Common myeloid progenitor, CD34-positive (primary cell): ENCODE measurements at regions of chr6 and their contacts with region 1.

Region 1: GRCh38 chr6:119110601-119111548 is 32.4 kb upstream of the FAM184A start:
- DNase-seq: peak; percentile 62 to 80 (median 72)
- H3K4me3 ChIP-seq: no peak overlapping the region
- H3K27ac ChIP-seq: no peak overlapping the region
- H3K4me1 ChIP-seq: peaks cover 0 to 8% (median 6%) of the 10 kb centered on the region in 4 experiments
- H3K27me3 ChIP-seq: no peaks in the 10 kb centered on the region

Region 2: GRCh38 chr6:118963003-118963402 is 147.9 kb before region 1 on chr6:
- CTCF ChIA-PET with region 1: interaction called, 129 read pairs
- POLR2A ChIA-PET with region 1: interaction called, 3 read pairs
- DNase-seq: peak; percentile 2 to 36 (median 29)
- H3K4me3 ChIP-seq: no peak overlapping the region
- H3K27ac ChIP-seq: no peak overlapping the region
- H3K4me1 ChIP-seq: no peaks in the 10 kb centered on the region
- H3K27me3 ChIP-seq: no peaks in the 10 kb centered on the region

Region 3: GRCh38 chr6:118968416-118968815 is 142.5 kb before region 1 on chr6:
- CTCF ChIA-PET with region 1: interaction called, 129 read pairs
- POLR2A ChIA-PET with region 1: interaction called, 3 read pairs
- DNase-seq: peak; percentile 33 to 61 (median 57)
- H3K4me3 ChIP-seq: no peak overlapping the region
- H3K27ac ChIP-seq: no peak overlapping the region
- H3K4me1 ChIP-seq: no peaks in the 10 kb centered on the region
- H3K27me3 ChIP-seq: no peaks in the 10 kb centered on the region

Region 4: DNA sequence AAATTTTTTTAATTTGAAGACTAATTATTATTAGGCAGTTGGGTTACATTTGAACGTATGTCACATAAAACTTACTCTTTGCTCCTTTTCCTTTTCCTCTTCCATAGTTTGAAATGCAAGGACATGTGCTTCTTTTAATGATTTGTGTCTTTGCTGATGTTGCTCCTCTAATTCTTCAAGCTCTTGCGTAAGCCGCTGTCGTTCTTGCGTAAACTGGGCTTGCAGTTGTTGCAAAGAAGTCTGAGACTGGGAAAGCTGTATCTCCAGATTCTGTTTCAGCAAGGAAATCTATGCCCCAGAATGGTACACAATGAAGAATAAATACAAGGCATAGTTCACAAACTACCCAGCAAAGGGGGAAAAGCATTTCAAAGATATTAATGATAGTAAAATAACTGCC is 130.8 kb before region 1 on chr6:
- CTCF ChIA-PET with region 1: interaction called, 10 read pairs
- POLR2A ChIA-PET with region 1: no interaction called
- DNase-seq: peak in 1 of 3 donors; percentile 3
- H3K4me3 ChIP-seq: no peak overlapping the region
- H3K27ac ChIP-seq: no peak overlapping the region
- H3K4me1 ChIP-seq: no peaks in the 10 kb centered on the region
- H3K27me3 ChIP-seq: no peaks in the 10 kb centered on the region

Region 5: DNA sequence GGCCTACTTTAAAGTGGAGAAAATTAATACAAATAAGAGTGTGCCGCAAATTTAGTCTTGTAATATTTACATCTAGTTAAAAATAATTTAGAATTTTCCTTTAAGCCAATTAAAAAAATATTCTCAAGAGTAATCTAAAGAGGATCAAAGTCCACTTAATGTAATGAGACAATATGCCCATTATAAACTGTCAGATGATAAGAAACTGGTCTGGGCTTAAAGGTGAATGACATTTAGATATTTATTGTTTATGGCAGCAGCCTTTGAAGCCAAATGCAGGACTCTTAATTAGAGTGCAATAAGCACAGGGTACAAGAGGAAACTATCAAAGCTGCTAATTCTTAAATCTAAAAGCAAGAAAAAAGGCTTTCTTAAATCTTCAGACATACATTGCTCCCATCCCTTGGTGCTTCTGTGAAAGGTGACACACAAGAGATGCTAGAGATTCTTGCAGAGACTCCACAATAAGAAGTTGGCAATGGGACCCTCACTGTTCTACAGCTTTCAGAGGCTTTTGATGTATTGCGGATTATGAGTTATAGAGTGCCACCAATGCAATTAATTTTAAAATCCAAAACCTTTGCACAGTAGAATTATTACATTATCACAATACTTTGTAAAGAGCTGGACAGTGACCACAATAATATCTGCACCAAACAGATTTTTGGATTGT is 122.6 kb after region 1 on chr6:
- CTCF ChIA-PET with region 1: no interaction called
- POLR2A ChIA-PET with region 1: no interaction called
- DNase-seq: no peak
- H3K4me3 ChIP-seq: no peak overlapping the region
- H3K27ac ChIP-seq: no peak overlapping the region
- H3K4me1 ChIP-seq: no peaks in the 10 kb centered on the region
- H3K27me3 ChIP-seq: no peaks in the 10 kb centered on the region